MCF 10A (cell line): ENCODE measurements at regions of chr13 and their contacts with region 1.

Region 1: DNA sequence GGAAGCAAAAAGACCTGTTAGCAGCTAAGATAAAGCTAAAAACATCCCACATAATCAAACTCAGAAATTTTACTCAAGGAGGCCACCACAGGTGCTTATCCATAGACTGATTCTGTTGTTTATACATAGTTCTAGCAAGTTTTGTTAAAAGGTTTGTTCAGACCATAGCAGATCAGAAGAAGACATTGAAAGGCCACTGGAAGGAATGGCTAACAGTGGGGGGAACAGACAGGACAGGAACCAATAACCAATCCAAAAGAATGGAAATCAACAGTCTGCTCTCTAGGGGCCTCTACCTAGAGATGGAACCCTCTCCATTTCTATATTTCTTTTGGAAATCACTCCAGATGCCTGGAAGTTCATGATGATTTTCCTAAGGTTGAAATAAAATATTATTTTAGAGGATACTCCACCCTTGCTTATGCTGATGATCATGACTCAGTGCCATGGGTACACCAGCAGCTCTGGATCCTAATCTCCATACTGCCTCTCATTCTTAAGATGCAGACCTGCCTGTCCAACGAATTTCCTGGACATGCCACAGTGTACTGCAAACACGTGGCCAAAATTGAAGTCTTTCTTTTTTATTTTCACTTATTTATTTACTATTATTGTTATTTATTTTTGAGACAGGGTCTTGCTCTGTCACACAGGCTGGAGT is 260.0 kb downstream of the MYO16 start:
- DNase-seq: no peak
- H3K4me3 Mint-ChIP-seq: no peak overlapping the region
- H3K27ac Mint-ChIP-seq: no peak overlapping the region
- H3K4me1 Mint-ChIP-seq: no peaks in the 10 kb centered on the region
- H3K27me3 Mint-ChIP-seq: peaks cover 38% of the 10 kb centered on the region
- CTCF ChIP-seq: no peak

Region 2: GRCh38 chr13:107600971-107601370 is 1288.5 kb before region 1 on chr13:
- CTCF ChIA-PET with region 1: no interaction called
- POLR2A ChIA-PET with region 1: no interaction called
- intact Hi-C with region 1: no loop called
- DNase-seq: peak; percentile 9
- H3K4me3 Mint-ChIP-seq: no peak overlapping the region
- H3K27ac Mint-ChIP-seq: no peak overlapping the region
- H3K4me1 Mint-ChIP-seq: no peaks in the 10 kb centered on the region
- H3K27me3 Mint-ChIP-seq: no peaks in the 10 kb centered on the region
- CTCF ChIP-seq: no peak

Region 3: DNA sequence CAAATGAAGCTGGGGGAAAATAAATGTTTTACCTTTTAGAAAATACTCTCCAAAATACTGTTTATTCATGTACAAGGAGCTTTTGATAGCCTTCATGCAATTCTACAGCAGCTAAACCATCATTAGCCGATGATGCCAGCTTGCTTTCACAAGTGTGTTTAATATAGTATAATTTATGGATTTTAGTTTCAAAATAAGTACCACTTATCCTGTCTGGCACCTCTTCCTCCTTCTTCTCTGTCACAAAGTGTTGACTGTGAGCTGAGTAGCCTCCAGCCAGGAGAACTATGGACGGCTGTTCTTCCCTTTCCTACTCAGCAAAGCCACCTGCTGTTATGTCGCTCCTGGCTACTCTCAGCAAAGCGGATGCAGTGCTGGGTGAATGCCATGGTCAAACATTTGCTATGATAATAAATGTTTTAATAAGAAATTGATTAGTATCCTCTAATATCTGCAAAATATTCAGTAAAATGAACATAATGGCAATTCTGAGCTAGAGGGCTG is 912.3 kb before region 1 on chr13:
- CTCF ChIA-PET with region 1: no interaction called
- POLR2A ChIA-PET with region 1: no interaction called
- intact Hi-C with region 1: no loop called
- DNase-seq: no peak
- H3K4me3 Mint-ChIP-seq: no peak overlapping the region
- H3K27ac Mint-ChIP-seq: no peak overlapping the region
- H3K4me1 Mint-ChIP-seq: no peaks in the 10 kb centered on the region
- H3K27me3 Mint-ChIP-seq: no peaks in the 10 kb centered on the region
- CTCF ChIP-seq: no peak

Region 4: GRCh38 chr13:108609353-108609752 is 280.1 kb before region 1 on chr13:
- CTCF ChIA-PET with region 1: interaction called, 121 read pairs
- POLR2A ChIA-PET with region 1: no interaction called
- intact Hi-C with region 1: no loop called
- DNase-seq: peak; percentile 53
- H3K4me3 Mint-ChIP-seq: no peak overlapping the region
- H3K27ac Mint-ChIP-seq: no peak overlapping the region
- H3K4me1 Mint-ChIP-seq: no peaks in the 10 kb centered on the region
- H3K27me3 Mint-ChIP-seq: peaks cover 57% of the 10 kb centered on the region
- CTCF ChIP-seq: peak; percentile 47